GM10248 (cell line): ENCODE measurements at regions of chr5 and their contacts with region 1.

Region 1: GRCh38 chr5:141557681-141558136 is 61.1 kb downstream of the DIAPH1 start:
- DNase-seq: peak; percentile 58
- CTCF ChIP-seq: peak; percentile 64

Region 2: DNA sequence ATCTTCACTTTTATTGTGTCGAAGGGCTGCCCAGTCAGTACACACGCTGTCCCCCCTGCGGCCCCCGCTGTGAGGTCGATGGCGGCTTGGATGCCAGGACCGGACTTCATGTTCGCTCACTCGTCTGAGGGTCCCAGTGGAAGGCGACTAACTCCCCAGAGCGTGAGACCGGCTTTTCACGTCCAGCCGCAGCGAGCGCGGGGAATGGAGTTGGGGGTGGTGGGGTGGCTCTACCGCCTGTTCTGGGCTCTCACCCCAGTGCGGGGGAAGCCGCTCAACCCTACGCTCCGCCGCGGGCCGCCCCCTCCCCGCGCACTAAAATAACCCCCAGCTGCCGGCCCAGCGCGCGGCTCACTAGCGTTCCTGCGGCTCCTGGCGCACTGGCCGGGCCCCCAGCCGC is 254.0 kb before region 1 on chr5 and contains the start of gene SLC25A2:
- CTCF ChIA-PET with region 1: no interaction called
- POLR2A ChIA-PET with region 1: no interaction called
- DNase-seq: no peak
- CTCF ChIP-seq: no peak

Region 3: GRCh38 chr5:141320225-141321169 is 237.2 kb before region 1 on chr5 and contains the start of gene TAF7:
- CTCF ChIA-PET with region 1: interaction called, 26 read pairs
- POLR2A ChIA-PET with region 1: no interaction called
- DNase-seq: peak; percentile 93
- CTCF ChIP-seq: peak; percentile 95

Region 4: GRCh38 chr5:141412854-141413539 is 144.7 kb before region 1 on chr5 and contains the start of gene PCDHGA10:
- CTCF ChIA-PET with region 1: interaction called, 180 read pairs
- POLR2A ChIA-PET with region 1: no interaction called
- DNase-seq: peak; percentile 73
- CTCF ChIP-seq: peak; percentile 77

Region 5: DNA sequence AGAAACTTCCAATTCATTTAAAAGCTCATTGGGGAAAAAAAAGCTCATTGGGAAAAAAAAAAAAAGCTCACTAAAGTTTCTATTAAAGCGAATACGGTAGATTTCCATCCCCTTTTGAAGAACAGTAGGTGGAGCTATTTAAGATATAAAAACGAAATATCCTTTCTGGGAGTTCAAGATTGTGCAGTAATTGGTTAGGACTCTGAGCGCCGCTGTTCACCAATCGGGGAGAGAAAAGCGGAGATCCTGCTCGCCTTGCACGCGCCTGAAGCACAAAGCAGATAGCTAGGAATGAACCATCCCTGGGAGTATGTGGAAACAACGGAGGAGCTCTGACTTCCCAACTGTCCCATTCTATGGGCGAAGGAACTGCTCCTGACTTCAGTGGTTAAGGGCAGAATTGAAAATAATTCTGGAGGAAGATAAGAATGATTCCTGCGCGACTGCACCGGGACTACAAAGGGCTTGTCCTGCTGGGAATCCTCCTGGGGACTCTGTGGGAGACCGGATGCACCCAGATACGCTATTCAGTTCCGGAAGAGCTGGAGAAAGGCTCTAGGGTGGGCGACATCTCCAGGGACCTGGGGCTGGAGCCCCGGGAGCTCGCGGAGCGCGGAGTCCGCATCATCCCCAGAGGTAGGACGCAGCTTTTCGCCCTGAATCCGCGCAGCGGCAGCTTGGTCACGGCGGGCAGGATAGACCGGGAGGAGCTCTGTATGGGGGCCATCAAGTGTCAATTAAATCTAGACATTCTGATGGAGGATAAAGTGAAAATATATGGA is 127.2 kb before region 1 on chr5 and contains the start of gene PCDHGA12:
- CTCF ChIA-PET with region 1: interaction called, 24 read pairs
- POLR2A ChIA-PET with region 1: no interaction called
- DNase-seq: peak; percentile 85
- CTCF ChIP-seq: peak; percentile 9

Region 6: DNA sequence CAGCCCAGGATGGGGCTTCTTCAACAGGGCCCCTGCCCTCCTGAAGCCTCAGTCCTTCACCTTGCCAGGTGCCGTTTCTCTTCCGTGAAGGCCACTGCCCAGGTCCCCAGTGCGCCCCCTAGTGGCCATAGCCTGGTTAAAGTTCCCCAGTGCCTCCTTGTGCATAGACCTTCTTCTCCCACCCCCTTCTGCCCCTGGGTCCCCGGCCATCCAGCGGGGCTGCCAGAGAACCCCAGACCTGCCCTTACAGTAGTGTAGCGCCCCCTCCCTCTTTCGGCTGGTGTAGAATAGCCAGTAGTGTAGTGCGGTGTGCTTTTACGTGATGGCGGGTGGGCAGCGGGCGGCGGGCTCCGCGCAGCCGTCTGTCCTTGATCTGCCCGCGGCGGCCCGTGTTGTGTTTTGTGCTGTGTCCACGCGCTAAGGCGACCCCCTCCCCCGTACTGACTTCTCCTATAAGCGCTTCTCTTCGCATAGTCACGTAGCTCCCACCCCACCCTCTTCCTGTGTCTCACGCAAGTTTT is 45.3 kb before region 1 on chr5:
- CTCF ChIA-PET with region 1: interaction called, 26 read pairs
- POLR2A ChIA-PET with region 1: no interaction called
- DNase-seq: peak; percentile 85
- CTCF ChIP-seq: peak; percentile 79

Region 7: DNA sequence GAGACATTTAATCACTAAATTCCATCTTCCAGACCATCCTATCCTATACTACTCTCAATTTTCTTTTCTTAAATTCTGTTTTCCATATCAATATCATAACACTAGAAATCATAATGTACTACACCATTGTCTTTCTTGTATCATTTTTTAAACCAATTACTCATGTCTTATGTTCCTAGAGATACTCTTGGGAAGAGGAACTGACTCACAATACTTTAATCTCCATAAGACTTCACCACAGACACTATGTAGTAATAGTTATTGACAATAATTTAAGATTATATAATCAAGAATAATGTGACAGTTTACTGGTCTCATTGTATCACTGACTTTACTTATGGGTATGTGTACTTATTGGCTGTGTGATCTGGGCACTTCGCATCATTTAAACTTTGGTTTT is 25.0 kb before region 1 on chr5:
- CTCF ChIA-PET with region 1: interaction called, 15 read pairs
- POLR2A ChIA-PET with region 1: no interaction called
- DNase-seq: no peak
- CTCF ChIP-seq: no peak

Region 8: GRCh38 chr5:141618804-141619554 is 61.3 kb after region 1 on chr5 and contains the start of gene DIAPH1:
- CTCF ChIA-PET with region 1: interaction called, 17 read pairs
- POLR2A ChIA-PET with region 1: no interaction called
- DNase-seq: peak; percentile 96
- CTCF ChIP-seq: peak; percentile 92